ENCODE measurements at regions of chr12 and their contacts with region 1.

Region 1: DNA sequence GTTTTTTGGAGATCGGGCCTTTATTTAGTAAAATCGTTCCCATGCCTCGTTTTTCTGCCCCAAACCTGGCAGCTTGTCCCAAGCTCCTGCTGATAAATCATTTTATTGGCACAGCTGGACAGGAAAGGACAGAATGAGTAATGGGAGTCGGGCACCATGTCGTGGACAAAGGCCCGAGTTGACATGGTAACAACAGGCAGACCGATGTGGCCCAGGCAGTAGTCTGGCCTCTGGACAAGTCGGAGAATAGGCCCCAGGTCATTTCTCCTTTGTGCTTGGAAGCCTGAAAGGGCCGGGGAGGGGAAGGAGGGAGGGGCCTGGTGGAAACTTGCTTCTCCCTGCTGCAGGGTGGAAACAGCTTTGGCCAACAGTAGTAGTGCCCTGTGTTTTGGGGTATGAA is 234.9 kb downstream of the SUDS3 start:
- DNase-seq: no peak
- H3K4me3 ChIP-seq: no peak overlapping the region
- H3K27ac ChIP-seq: no peak overlapping the region
- H3K4me1 ChIP-seq: no peaks in the 10 kb centered on the region
- H3K27me3 ChIP-seq: no peaks in the 10 kb centered on the region
- CTCF ChIP-seq: no peak

Region 2: GRCh38 chr12:118404876-118405521 is 206.3 kb before region 1 on chr12:
- intact Hi-C with region 1: loop called (anchors 10 kb)
- DNase-seq: peak in 1 of 2 donors; percentile 59
- H3K4me3 ChIP-seq: no peak overlapping the region
- H3K27ac ChIP-seq: no peak overlapping the region
- H3K4me1 ChIP-seq: no peaks in the 10 kb centered on the region
- H3K27me3 ChIP-seq: no peaks in the 10 kb centered on the region
- CTCF ChIP-seq: peak; percentile 71

Measured in tibial artery (tissue), 4 donors.